ENCODE measurements at regions of chr6 and their contacts with region 1.

Region 1: DNA sequence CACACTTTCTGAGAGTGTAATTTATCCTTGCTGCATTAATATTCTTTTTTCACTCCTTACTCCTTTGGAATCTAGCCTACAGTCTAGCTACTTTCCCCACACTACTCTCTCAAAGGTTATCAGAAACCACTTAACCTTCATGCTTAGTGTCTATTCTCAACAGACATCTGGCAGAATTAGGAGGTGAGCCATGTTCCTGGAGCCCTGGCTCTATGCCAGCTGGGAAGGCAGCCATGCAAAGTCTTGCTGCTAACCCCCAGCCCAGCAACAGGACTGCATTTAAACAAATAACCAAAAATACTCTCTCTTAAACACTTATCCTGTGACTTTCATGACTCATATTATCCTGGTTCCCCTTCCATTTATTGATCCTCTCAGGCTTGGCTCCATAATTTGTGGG is 260.2 kb downstream of the BCKDHB start:
- DNase-seq: peak; percentile 55 to 79 (median 71)
- ATAC-seq: peak; percentile 83 to 91 (median 86)
- H3K4me3 ChIP-seq: no peak overlapping the region
- H3K27ac ChIP-seq: no peak overlapping the region
- H3K4me1 ChIP-seq: peaks cover 0 to 17% (median 3%) of the 10 kb centered on the region in 12 donors
- H3K27me3 ChIP-seq: no peaks in the 10 kb centered on the region
- CTCF ChIP-seq: no peak
- POLR2A ChIP-seq: no peak

Region 2: DNA sequence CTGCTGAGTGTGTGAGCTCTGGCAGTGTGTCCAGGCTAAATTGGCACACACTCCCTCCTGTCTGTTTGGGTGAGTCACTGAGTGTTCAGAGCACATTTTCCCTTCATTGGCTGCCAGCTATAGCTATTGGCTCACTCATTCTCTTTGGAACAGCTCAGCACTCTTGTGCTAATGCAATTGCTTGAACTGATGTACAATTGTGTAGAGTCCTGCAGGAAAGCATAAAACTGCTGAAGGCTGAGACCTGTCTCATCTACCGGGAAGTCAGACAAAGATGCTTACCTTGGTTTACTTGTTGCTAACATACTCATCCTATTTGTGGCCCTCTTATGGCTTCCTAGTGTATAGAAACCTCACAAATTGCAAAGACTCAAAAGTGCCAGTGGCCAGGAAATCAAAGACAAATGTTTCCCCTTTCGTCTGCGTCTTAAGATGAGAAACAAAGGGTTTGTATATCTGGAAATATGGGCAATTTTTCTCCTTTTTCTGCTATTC is 90.8 kb after region 1 on chr6:
- intact Hi-C with region 1: loop called in 2 of 10 experiments (anchors 10 kb)
- DNase-seq: peak; percentile 48 to 82 (median 73)
- ATAC-seq: peak; percentile 96 to 100 (median 100)
- H3K4me3 ChIP-seq: no peak overlapping the region
- H3K27ac ChIP-seq: no peak overlapping the region
- H3K4me1 ChIP-seq: peaks cover 0 to 23% (median 13%) of the 10 kb centered on the region in 12 donors
- H3K27me3 ChIP-seq: no peaks in the 10 kb centered on the region
- CTCF ChIP-seq: no peak
- POLR2A ChIP-seq: no peak

Region 3: DNA sequence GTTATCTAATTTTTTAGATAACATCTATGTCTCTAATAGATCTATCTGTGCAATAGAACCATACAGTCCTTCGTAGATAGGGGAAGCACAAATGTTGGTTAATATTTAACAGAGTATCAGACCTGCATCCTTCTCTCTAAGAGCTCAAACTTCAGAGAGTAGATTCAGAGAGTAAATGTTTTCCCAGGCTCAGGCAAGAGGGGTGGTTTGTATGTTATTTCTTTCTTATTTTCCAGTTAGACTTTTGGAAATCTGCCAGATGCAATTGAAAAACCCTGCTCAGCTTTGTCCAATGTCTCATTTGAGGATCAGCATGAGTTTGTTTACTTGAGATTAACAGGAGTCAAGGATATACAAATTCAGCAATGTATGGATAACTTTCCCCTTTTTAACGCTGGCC is 101.7 kb after region 1 on chr6:
- intact Hi-C with region 1: loop called in 1 of 10 experiments (anchors 10 kb)
- DNase-seq: no peak
- ATAC-seq: no peak
- H3K4me3 ChIP-seq: no peak overlapping the region
- H3K27ac ChIP-seq: no peak overlapping the region
- H3K4me1 ChIP-seq: peaks cover 0 to 16% (median 0%) of the 10 kb centered on the region in 12 donors
- H3K27me3 ChIP-seq: no peaks in the 10 kb centered on the region
- CTCF ChIP-seq: no peak
- POLR2A ChIP-seq: no peak